A673 (cell line): ENCODE measurements at regions of chr19 and their contacts with region 1.

Region 1: DNA sequence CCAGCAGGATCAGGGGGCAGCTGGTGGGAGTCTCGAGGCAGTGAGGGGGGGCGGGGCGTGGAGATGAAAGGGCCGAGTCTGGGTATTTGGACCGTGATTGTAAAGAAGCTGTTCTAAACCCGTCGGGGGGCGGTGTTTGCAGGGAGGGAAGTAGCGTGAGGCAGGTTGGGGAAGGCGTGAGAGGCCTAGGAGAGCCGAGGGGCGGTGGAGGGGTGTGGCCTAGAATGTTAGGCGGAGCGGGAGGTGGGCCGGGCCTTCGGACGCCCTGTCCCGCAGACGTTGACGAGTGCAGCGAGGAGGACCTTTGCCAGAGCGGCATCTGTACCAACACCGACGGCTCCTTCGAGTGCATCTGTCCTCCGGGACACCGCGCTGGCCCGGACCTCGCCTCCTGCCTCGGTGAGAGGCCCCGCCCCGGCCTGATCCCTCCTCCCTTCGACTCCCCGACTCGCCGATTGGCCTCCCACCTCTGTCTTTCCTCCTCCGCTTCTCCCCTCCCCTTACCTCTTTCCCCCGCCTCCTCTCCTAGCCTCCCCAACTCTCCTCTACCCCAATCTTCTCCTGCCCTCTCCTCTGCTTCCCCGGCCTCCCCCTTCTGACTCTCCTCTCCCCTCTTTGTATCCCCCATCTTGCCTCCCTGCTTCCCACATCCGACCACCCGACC is 12.6 kb downstream of the LTBP4 start:
- DNase-seq: peak; percentile 94
- H3K4me3 ChIP-seq: peak overlapping the region; percentile 80
- H3K27ac ChIP-seq: peak overlapping the region; percentile 94
- H3K4me1 ChIP-seq: peaks cover 30% of the 10 kb centered on the region
- H3K27me3 ChIP-seq: no peaks in the 10 kb centered on the region
- CTCF ChIP-seq: no peak

Region 2: GRCh38 chr19:40640744-40641143 is 27.0 kb after region 1 on chr19:
- CTCF ChIA-PET with region 1: interaction called, 15 read pairs
- POLR2A ChIA-PET with region 1: no interaction called
- intact Hi-C with region 1: no loop called
- DNase-seq: no peak
- H3K4me3 ChIP-seq: no peak overlapping the region
- H3K27ac ChIP-seq: no peak overlapping the region
- H3K4me1 ChIP-seq: peaks cover 13% of the 10 kb centered on the region
- H3K27me3 ChIP-seq: no peaks in the 10 kb centered on the region
- CTCF ChIP-seq: no peak